ENCODE measurements at regions of chr14 and their contacts with region 1.

Region 1: DNA sequence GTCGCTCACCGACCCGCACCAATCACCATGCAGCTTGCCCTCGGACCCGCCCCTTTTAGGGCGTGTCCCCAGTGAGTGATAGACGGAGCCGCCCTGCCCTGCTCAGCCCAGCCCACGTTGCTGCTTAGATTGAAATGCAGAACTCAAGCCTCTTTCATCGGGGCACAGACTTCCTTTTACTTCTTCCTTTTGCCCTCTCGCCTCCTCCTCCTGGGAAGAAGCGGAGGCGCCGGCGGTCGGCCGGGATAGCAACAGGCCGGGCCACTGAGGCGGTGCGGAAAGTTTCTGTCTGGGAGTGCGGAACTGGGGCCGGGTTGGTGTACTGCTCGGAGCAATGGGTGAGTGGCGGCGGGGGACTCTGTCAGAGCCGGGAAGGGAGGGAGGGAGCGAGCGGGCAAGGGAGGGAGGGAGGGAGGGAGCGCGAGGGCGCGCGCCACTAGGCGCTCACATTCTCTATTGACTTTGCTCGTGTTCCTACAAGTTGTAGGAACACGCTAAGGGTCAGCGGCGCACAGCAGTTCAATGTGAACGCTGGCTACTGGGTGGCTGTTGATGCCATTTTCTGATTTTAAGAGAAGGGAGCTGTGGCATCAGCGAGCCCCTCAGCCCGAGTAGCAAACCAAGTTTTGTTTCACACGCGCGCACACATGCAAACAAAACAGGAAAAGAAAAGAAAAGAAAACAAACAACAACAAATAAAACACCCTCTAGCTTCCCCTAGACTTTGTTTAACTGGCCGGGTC is at the start of gene PAX9:
- DNase-seq: peak; percentile 70
- H3K4me3 ChIP-seq: peak within 1 kb of the TSS in 2 of 3 experiments; percentile 27 to 42
- H3K27ac ChIP-seq: no peak within 1 kb of the TSS
- H3K4me1 ChIP-seq: peaks cover 17% of the 10 kb centered on the region
- H3K27me3 ChIP-seq: peaks cover 87 to 98% of the 10 kb centered on the region in 2 experiments
- CTCF ChIP-seq: no peak
- POLR2A ChIP-seq: no peak
- total RNA-seq, gene PAX9: 0.44 and 4.8 TPM in 2 replicates

Region 2: GRCh38 chr14:36057452-36058141 is 604.3 kb before region 1 on chr14:
- CTCF ChIA-PET with region 1: no interaction called
- POLR2A ChIA-PET with region 1: no interaction called
- dilution Hi-C with region 1: no loop called
- intact Hi-C with region 1: no loop called
- DNase-seq: peak; percentile 10
- H3K4me3 ChIP-seq: no peak overlapping the region
- H3K27ac ChIP-seq: no peak overlapping the region
- H3K4me1 ChIP-seq: no peaks in the 10 kb centered on the region
- H3K27me3 ChIP-seq: peaks cover 0 to 2% of the 10 kb centered on the region in 2 experiments
- CTCF ChIP-seq: no peak
- POLR2A ChIP-seq: no peak

Region 3: DNA sequence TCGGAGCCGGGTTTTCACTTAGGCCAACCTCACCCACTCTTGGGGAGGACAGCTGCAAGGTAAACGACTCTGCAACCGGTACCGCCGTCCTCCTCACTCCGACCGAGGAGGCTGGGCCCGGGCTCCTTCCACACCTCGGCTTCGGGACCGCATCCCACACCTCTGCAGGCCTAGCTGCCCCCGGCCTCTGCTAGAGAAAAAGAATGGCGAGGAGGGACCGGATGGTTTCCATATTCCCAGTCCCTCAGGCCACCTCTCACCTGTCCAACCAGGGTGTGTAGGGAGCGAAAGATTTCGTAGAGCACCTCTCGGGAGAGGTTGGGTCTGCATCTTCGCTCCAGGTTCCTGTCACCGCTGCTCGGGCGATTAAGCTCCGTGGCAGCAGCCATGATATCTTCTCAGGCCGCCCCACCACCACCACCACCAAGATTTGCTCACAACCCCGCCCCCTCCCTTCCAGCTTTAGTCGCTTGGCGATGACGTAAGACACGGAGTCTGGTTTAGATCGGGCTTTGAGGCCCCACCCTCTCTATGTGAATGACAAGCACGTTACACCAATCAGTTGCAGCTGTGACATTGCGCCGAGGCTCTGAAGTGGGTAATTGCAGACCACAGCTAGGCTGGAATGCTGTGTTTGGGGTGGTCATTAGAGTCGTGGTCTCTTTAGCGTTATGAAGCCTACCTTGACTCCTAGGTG is 341.6 kb before region 1 on chr14 and contains the start of gene MBIP:
- CTCF ChIA-PET with region 1: no interaction called
- POLR2A ChIA-PET with region 1: no interaction called
- dilution Hi-C with region 1: no loop called
- intact Hi-C with region 1: loop called (anchors 2 kb)
- DNase-seq: peak; percentile 96
- H3K4me3 ChIP-seq: peak within 1 kb of the TSS; percentile 95 to 98 (median 97)
- H3K27ac ChIP-seq: peak within 1 kb of the TSS; percentile 43
- H3K4me1 ChIP-seq: peaks cover 27% of the 10 kb centered on the region
- H3K27me3 ChIP-seq: peaks cover 8 to 37% of the 10 kb centered on the region in 2 experiments
- CTCF ChIP-seq: no peak
- POLR2A ChIP-seq: no peak
- total RNA-seq, gene MBIP: 14.5 and 19.0 TPM in 2 replicates

Region 4: GRCh38 chr14:36647824-36648753 is 13.8 kb before region 1 on chr14:
- CTCF ChIA-PET with region 1: interaction called, 7 read pairs
- POLR2A ChIA-PET with region 1: no interaction called
- dilution Hi-C with region 1: no loop called
- intact Hi-C with region 1: loop called (anchors 2 kb)
- DNase-seq: peak; percentile 40
- H3K4me3 ChIP-seq: peak overlapping the region in 2 of 3 experiments; percentile 31 to 35
- H3K27ac ChIP-seq: no peak overlapping the region
- H3K4me1 ChIP-seq: peaks cover 10% of the 10 kb centered on the region
- H3K27me3 ChIP-seq: peaks cover 59 to 91% of the 10 kb centered on the region in 2 experiments
- CTCF ChIP-seq: peak; percentile 42 to 47
- POLR2A ChIP-seq: no peak

Region 5: DNA sequence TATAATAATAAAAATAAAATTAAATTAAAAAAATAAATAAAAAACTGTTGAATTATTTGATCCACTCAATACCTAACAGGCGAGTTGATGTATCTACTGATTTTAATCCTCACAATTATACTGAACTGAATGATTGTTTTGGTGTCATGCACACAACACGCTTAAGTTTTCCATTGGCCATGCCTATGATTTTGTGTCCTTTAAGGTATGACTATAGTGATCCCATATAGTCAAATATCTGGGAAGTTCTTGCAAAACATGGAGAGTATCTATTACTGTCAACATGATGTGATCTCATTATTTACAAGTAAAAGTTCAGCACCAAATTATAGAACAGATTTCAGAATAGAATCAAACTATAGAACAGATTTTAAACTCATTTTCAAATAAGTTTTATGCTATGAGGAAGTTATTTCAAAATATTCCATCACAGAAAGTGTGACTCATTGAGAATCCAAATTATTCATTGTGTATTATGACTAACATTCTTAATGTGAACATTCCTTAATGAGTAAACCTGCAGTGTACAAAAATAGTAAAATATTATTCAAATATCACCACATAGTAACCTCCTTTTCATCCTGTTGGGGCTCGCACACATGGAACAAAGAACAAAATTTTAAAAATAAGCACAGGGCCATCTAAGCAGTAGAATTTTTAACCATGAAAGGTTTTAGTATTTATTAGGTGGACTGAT is 320.1 kb after region 1 on chr14:
- CTCF ChIA-PET with region 1: no interaction called
- POLR2A ChIA-PET with region 1: no interaction called
- dilution Hi-C with region 1: no loop called
- intact Hi-C with region 1: no loop called
- DNase-seq: peak; percentile 73
- H3K4me3 ChIP-seq: no peak overlapping the region
- H3K27ac ChIP-seq: peak overlapping the region; percentile 55
- H3K4me1 ChIP-seq: peaks cover 7% of the 10 kb centered on the region
- H3K27me3 ChIP-seq: no peaks in the 10 kb centered on the region
- CTCF ChIP-seq: no peak
- POLR2A ChIP-seq: no peak

Region 6: DNA sequence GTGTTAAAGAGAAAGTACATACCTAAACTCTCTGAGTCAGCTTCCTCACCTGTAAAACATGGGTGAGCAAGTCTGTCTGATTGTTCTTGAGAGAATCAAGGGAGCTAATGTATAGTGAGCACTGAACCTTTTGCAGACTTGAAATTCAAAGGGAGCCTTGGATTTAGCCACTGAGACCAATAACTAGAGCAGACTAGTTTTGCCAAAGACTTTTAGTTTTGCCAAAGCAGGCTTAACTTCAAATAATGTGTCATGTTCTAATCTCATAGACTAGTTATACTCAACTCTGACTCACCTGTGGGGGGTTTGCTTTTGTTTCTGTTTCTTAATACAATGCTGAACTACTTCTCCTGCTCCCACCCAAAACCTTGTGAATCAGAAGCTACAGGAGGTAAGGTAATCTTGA is 386.7 kb after region 1 on chr14:
- CTCF ChIA-PET with region 1: no interaction called
- POLR2A ChIA-PET with region 1: no interaction called
- dilution Hi-C with region 1: no loop called
- intact Hi-C with region 1: loop called (anchors 5 kb)
- DNase-seq: peak; percentile 33
- H3K4me3 ChIP-seq: no peak overlapping the region
- H3K27ac ChIP-seq: no peak overlapping the region
- H3K4me1 ChIP-seq: peaks cover 39% of the 10 kb centered on the region
- H3K27me3 ChIP-seq: no peaks in the 10 kb centered on the region
- CTCF ChIP-seq: no peak
- POLR2A ChIP-seq: no peak

Region 7: GRCh38 chr14:37197421-37198272 is 535.7 kb after region 1 on chr14 and contains the start of gene MIPOL1:
- CTCF ChIA-PET with region 1: no interaction called
- POLR2A ChIA-PET with region 1: no interaction called
- dilution Hi-C with region 1: no loop called
- intact Hi-C with region 1: loop called (anchors 2 kb)
- DNase-seq: peak; percentile 93
- H3K4me3 ChIP-seq: peak within 1 kb of the TSS; percentile 61 to 86 (median 86)
- H3K27ac ChIP-seq: peak within 1 kb of the TSS; percentile 97
- H3K4me1 ChIP-seq: peaks cover 52% of the 10 kb centered on the region
- H3K27me3 ChIP-seq: no peaks in the 10 kb centered on the region
- CTCF ChIP-seq: peak in 1 of 2 donors; percentile 49
- POLR2A ChIP-seq: peak; percentile 92
- total RNA-seq, gene MIPOL1: 31.3 and 33.5 TPM in 2 replicates

Region 8: GRCh38 chr14:37594238-37594914 is 932.4 kb after region 1 on chr14:
- CTCF ChIA-PET with region 1: no interaction called
- POLR2A ChIA-PET with region 1: no interaction called
- dilution Hi-C with region 1: no loop called
- intact Hi-C with region 1: loop called (anchors 5 kb)
- DNase-seq: peak; percentile 80
- H3K4me3 ChIP-seq: peak overlapping the region; percentile 30 to 62 (median 41)
- H3K27ac ChIP-seq: no peak overlapping the region
- H3K4me1 ChIP-seq: peaks cover 4% of the 10 kb centered on the region
- H3K27me3 ChIP-seq: peaks cover 73 to 88% of the 10 kb centered on the region in 2 experiments
- CTCF ChIP-seq: peak; percentile 81 to 89
- POLR2A ChIP-seq: no peak